ENCODE measurements at regions of chrX and their contacts with region 1.

Region 1: DNA sequence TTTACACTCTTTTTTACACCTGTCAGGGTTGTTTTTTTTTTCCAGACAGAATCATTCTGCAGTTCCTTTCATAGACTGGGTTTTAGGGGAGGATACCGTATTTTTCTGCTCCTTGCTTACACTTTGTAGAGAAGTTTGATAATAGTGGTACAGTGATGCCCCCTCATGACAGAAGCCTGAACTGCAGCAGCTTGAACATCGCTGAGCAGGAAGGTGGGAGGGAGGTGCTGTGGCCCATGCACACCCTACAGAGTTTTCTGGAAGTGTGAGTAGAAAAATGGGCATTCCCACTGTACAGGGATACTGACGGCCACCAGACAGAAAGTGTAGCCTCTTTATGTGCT is 54.5 kb downstream of the RAB40A start:
- DNase-seq: peak; percentile 32 to 84 (median 66)
- ATAC-seq: peak; percentile 84 to 89 (median 87)
- H3K4me3 ChIP-seq: peak overlapping the region; percentile 1 to 52
- H3K4me3 Mint-ChIP-seq: peak overlapping the region; percentile 82 to 92 (median 91)
- H3K27ac ChIP-seq: no peak overlapping the region
- H3K27ac Mint-ChIP-seq: peak overlapping the region; percentile 84 to 97
- H3K4me1 ChIP-seq: peaks cover 0 to 10% of the 10 kb centered on the region in 2 experiments
- H3K4me1 Mint-ChIP-seq: peaks cover 19 to 41% (median 38%) of the 10 kb centered on the region in 3 donors
- H3K27me3 ChIP-seq: no peaks in the 10 kb centered on the region
- H3K27me3 Mint-ChIP-seq: peaks cover 0 to 27% of the 10 kb centered on the region in 2 donors

Region 2: DNA sequence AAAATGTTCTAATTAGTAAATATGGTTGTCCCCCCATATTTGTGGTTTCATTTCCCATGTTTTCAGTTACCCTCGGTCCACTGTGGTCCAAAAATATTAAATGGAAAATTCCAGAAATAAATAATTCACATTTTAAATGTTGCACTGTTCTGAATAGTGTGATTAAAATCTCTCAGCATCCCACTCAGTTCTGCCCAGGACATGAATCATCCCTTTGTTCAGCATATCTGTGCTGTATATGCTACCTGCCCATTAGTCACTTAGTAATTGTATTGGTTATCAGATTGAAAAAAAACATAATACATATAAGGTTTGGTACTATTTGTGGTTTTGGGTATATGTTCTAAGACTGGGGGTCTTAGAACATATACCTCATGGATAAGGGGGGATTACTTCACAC is 316.7 kb before region 1 on chrX:
- CTCF ChIA-PET with region 1: no interaction called
- POLR2A ChIA-PET with region 1: no interaction called
- DNase-seq: no peak
- ATAC-seq: no peak
- H3K4me3 ChIP-seq: no peak overlapping the region
- H3K4me3 Mint-ChIP-seq: no peak overlapping the region
- H3K27ac ChIP-seq: no peak overlapping the region
- H3K27ac Mint-ChIP-seq: no peak overlapping the region
- H3K4me1 ChIP-seq: no peaks in the 10 kb centered on the region
- H3K4me1 Mint-ChIP-seq: peaks cover 0 to 1% (median 0%) of the 10 kb centered on the region in 3 donors
- H3K27me3 ChIP-seq: peaks cover 0 to 2% of the 10 kb centered on the region in 2 experiments
- H3K27me3 Mint-ChIP-seq: peaks cover 4 to 36% of the 10 kb centered on the region in 2 donors

Region 3: DNA sequence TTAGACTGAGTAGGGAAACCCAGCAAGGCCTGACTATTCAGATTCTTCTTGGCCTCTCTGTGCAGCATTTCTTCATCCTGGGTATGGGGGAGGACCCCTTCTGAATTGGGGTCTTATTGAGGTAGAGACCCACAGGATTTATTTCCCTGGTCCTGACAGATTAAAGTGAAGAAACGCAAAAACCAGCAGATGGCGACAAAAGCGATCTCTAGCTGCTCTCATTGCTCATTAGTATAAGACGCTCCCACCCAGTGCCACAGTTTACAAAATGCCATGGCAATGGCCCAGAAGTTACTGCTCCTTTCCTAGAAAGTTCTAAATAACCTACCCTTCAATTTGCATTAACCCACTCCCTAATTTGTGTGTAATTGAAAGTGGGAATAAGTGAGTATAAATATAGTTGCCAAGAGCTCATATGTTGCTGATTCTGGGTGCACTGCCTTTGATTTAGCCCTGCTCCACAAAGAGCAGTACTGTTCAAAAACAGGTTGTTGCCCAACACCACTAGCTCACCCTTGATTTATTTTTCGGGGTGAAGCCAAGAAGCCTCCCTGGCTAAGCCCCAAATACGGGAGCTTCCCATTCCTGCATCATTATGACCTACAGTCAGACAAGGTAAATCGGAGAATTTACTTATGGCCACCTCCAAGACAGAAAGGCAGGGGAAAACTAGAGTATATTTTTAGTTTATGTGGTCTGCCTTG is 253.6 kb before region 1 on chrX:
- CTCF ChIA-PET with region 1: interaction called, 3 to 10 read pairs
- POLR2A ChIA-PET with region 1: no interaction called
- DNase-seq: peak in 28 of 35 experiments; percentile 11 to 72 (median 34)
- ATAC-seq: peak in 2 of 4 experiments; percentile 22 to 28
- H3K4me3 ChIP-seq: no peak overlapping the region
- H3K4me3 Mint-ChIP-seq: no peak overlapping the region
- H3K27ac ChIP-seq: no peak overlapping the region
- H3K27ac Mint-ChIP-seq: no peak overlapping the region
- H3K4me1 ChIP-seq: peaks cover 0 to 10% of the 10 kb centered on the region in 2 experiments
- H3K4me1 Mint-ChIP-seq: peaks cover 5 to 11% (median 9%) of the 10 kb centered on the region in 3 donors
- H3K27me3 ChIP-seq: peaks cover 0 to 4% of the 10 kb centered on the region in 2 experiments
- H3K27me3 Mint-ChIP-seq: peaks cover 3 to 6% of the 10 kb centered on the region in 2 donors

Region 4: GRCh38 chrX:104288961-104289360 is 824.2 kb after region 1 on chrX:
- CTCF ChIA-PET with region 1: no interaction called
- POLR2A ChIA-PET with region 1: interaction called in 1 of 2 experiments, 13 read pairs
- DNase-seq: no peak
- ATAC-seq: no peak
- H3K4me3 ChIP-seq: no peak overlapping the region
- H3K4me3 Mint-ChIP-seq: no peak overlapping the region
- H3K27ac ChIP-seq: no peak overlapping the region
- H3K27ac Mint-ChIP-seq: no peak overlapping the region
- H3K4me1 ChIP-seq: no peaks in the 10 kb centered on the region
- H3K4me1 Mint-ChIP-seq: no peaks in the 10 kb centered on the region
- H3K27me3 ChIP-seq: peaks cover 0 to 2% of the 10 kb centered on the region in 2 experiments
- H3K27me3 Mint-ChIP-seq: peaks cover 15 to 50% of the 10 kb centered on the region in 2 donors

Measured in T-cell (primary cell).